ENCODE measurements at regions of chr3 and their contacts with region 1.

Region 1: GRCh38 chr3:62180514-62180913 is 192.8 kb downstream of the FEZF2 start:
- DNase-seq: no peak

Region 2: DNA sequence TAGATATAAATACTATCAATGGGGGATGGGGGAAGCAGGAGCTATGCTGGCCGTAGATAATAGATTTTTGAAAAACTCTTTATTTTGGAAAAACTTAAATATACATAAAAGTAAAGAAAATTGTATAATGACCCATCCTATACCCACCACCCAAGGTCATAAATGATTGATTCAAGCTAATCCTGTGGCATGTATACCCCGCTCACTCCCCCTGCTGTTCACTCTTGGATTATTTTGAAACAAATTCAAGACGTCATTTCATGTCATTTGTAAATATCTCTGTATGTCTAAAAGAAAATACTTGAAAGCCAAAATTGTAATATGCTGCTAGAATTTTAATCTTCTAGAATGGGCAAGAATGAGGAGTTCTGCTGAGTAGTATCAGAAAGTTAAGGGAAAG is 48.9 kb before region 1 on chr3:
- intact Hi-C with region 1: loop called (anchors 2 kb)
- DNase-seq: no peak

Region 3: DNA sequence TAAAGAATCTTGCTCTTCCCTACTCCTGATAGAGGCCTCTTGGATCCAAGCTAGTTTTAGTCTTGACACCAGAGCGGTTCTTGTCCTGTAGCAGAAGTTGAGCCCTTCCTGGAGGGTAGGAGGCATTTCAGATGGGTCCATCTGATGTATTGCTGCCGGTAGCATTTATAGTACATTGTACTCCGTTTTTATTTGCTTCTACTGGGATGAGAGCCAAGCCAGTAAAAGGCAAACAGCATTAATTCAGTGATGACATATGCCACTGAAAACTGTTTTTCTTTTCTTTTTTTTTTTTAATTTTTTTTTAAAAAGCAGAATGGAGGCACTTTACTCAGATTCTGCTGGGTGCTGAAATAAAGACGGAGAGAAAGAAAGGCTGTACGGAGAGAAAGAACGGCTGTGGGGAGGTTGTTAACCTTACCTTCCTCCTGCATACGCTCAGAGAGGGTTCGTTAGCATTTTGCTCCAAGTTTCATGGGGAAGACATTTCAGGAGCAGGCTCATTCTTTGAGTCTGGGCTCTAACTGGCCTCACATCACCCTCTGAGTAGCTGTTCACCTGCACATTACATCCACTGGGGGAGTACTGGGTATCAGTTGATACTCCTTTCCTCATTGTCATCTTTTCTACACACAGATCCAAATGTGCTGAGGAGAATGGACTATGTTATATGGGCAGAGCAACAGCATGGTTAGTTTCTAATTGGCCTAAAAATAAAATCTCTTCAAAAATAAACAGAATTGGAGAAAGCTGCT is 31.3 kb after region 1 on chr3:
- intact Hi-C with region 1: no loop called
- DNase-seq: no peak

Measured in cardiac septum (tissue), 1 donor.